ENCODE measurements at regions of chr11 and their contacts with region 1.

Region 1: DNA sequence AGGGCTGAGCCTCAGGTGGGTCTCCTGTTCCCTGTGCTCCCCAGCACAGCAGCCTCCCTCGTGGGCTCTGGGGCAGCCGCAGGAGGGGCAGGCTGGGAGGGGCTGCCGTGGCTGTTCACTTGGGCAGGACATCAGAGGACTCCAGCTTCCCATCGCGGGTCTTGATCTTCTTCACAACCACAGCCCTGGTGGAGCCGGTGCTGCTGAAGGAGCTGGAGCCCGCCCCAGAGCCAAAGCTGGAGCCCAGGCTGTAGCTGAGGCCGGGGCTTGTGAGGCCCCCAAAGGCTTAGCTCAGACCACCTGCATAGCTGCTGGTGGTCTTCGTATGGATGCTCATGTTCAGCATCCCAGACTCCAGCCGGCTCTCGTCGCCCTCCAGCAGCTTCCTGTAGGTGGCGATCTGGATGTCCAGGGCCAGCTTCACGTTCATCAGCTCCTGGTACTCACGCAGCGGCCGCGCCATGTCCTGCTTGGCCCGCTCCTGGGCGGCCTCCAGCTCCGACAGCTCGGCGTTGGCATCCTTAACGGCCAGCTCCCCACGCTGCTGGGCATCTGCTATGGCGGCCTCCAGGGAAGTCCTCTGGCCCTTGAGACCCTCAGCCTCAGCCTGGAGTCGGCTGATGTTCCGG is 126.1 kb downstream of the NECTIN1 start:
- DNase-seq: no peak

Region 2: GRCh38 chr11:119550053-119550752 is 52.7 kb before region 1 on chr11:
- intact Hi-C with region 1: no loop called
- DNase-seq: no peak

Region 3: DNA sequence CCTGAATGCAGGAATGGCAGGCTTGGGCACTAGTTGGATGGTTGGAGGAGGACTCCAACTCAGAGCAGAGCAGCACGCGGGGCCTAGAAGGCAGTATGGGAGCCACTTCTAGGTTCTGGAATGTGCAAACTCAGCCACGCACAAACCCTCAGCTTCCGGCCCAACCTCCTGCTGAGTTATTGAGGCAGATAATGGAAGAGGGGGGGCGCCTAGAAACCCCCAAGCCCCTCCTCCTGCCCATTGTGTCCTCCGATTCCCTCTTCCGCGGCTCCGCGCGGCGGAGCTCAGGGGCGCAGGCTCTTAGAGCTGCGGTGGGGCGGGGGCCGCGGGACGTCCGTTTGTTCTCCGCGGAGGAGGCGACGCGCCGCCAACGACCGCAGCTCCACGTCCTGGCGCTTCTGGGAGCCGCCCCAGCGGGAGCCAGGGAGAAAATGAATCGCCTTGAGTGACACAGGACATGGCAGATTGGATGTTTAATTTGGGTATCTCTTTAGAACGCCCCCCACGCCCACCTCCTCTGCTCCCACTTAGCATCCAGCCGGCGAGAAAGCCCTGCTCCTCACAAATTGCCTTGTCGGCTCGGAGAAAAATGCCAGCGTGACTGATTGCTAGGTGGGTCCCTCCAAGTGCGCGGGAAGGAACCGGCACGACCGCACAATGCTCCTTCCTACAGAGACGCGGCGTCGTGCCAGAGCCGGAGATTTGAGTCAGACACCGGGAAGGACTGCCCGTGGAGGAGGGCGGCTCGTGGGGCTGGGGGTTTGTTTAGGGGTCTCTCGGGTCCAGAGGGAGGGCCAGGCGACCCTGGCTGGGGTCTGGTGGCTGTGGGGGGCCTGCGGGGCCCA is 18.4 kb before region 1 on chr11:
- intact Hi-C with region 1: loop called (anchors 1 kb)
- DNase-seq: peak; percentile 31 to 95 (median 66)

Region 4: GRCh38 chr11:119666463-119667131 is 63.7 kb after region 1 on chr11:
- intact Hi-C with region 1: no loop called
- DNase-seq: peak; percentile 71 to 97 (median 86)

Region 5: GRCh38 chr11:120013325-120014270 is 410.7 kb after region 1 on chr11:
- intact Hi-C with region 1: no loop called
- DNase-seq: peak; percentile 49 to 96 (median 74)

Measured in posterior cingulate gyrus (tissue), 11 donors.